ENCODE measurements at regions of chr13 and their contacts with region 1.

Region 1: DNA sequence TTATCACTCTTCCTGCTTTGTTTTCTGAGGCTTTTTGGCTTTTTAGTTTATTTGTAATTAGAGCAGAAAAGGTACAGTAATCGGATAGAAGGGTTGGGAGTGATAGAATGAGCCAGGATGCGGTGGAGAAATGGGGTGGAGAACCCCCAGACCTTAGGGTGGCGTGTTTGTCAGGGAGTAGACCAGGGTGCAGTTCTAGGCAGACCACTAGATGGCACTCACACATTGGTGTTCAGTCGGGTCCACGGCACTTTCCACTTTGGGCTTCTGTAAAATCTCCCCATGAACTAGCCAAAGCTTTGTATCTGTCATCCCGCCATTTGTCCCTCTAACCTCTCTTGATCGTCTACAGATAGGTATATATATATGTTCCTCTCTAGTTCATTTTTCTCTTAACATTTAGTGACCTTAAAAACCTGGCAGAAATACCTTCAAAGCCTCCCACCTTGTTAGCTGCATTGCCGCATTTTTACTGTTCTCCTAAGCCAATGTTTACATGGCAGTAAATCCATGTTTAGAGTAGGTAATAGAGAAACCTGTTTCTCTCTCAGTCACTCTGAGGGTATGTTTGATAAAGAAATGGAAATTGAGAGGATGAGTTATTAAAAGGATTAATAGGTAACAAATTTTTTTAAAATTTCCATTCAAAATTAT is 154.9 kb downstream of the TM9SF2 start:
- DNase-seq: peak; percentile 75
- CTCF ChIP-seq: peak; percentile 89

Region 2: GRCh38 chr13:99630269-99630898 is 25.8 kb before region 1 on chr13:
- CTCF ChIA-PET with region 1: interaction called, 17 read pairs
- POLR2A ChIA-PET with region 1: no interaction called
- DNase-seq: no peak
- CTCF ChIP-seq: no peak

Region 3: DNA sequence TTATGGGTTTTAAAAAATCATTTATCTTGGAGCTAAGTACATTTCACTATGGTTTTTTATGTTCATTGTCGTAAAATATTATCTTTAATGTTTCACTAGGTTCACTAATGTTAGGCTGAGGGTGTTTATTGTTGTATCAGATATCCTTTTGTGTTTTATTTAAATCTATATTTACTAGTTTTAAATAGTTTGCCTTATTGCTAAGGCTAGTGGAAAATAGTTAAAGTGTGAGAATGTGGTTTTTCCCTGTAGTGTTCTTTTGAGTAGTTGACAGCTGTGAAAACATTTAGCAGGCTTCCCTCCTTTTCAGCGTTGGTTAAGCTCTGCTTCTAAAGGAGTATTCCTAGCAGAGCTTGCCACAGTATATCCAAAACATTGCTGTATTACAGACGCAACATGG is 16.0 kb before region 1 on chr13:
- CTCF ChIA-PET with region 1: interaction called, 21 read pairs
- POLR2A ChIA-PET with region 1: no interaction called
- DNase-seq: no peak
- CTCF ChIP-seq: no peak

Region 4: DNA sequence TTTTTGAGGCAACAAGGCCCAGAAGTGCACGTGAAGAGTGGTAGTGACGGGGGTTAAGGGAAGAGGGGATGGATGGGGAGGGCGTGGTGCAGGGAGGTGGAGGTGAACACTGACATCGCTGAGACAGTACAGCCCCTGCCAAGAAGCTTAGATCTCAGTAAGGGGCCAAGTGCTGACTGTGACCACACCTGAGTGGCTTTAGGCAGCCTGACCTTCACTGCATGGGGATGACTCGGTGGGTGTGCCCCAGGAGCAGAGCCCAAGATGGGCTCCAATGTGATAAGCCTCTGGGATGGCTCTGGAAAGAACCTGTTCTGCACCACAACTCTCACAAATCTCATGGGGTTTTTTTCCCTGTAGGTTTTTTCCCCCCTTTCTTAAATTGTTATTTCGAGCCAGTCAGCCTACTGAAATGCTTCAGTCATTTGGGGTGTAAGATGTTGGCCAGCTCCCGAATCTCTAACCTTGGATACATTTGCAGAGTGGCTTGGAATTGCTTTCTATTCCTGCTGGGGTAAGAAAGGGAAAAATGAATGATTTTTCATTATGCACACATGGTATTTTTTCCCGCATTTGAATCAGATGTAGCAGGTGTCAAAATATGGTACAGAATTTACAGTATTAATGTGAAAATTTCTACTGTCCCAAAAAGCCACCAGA is 10.1 kb after region 1 on chr13:
- CTCF ChIA-PET with region 1: interaction called, 62 read pairs
- POLR2A ChIA-PET with region 1: no interaction called
- DNase-seq: no peak
- CTCF ChIP-seq: no peak

Region 5: GRCh38 chr13:100235311-100235901 is 579.2 kb after region 1 on chr13:
- CTCF ChIA-PET with region 1: interaction called, 23 read pairs
- POLR2A ChIA-PET with region 1: no interaction called
- DNase-seq: peak; percentile 41
- CTCF ChIP-seq: peak; percentile 45

Region 6: DNA sequence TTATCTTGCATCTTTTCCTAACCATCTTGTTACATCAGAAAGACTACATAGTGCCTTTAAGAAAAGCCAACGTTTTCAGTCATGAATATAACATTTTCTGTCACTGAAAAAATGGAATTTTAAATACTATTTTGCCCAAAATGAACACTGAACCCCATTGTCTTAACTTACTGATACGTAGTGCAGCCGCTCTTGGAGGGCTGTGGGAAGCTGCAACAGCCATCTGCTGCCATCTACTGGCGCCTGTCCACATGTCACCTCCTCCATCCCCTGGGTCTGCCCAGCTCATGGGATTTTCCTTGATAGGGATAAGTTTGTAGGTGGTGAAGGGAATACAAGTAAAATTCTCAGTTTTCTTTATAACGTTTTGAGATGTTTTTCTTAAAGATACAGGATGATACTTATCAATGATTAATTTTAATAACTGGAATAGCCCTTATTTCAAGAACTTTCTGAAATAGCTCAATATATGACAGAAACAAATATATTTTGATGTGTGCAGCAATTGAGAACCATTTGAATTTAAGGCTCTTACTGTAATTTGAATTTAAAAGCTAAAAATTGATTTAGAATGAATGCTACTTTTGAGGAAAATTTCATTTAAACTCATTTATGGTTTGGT is 858.7 kb after region 1 on chr13:
- CTCF ChIA-PET with region 1: interaction called, 58 read pairs
- POLR2A ChIA-PET with region 1: no interaction called
- DNase-seq: peak; percentile 83
- CTCF ChIP-seq: peak; percentile 90